ENCODE measurements at regions of chr18 and their contacts with region 1.

Region 1: GRCh38 chr18:25467226-25467987 is 115.4 kb upstream of the ZNF521 start:
- DNase-seq: no peak
- ATAC-seq: no peak; the same call in 2 of the 3 replicates
- H3K4me3 ChIP-seq: no peak overlapping the region
- H3K27ac ChIP-seq: no peak overlapping the region
- H3K4me1 ChIP-seq: no peaks in the 10 kb centered on the region
- H3K27me3 ChIP-seq: no peaks in the 10 kb centered on the region
- CTCF ChIP-seq: no peak
- EP300 ChIP-seq: no peak
- POLR2A ChIP-seq: no peak
- RAD21 ChIP-seq: no peak

Region 2: GRCh38 chr18:25349131-25349925 is 118.1 kb before region 1 on chr18:
- CTCF ChIA-PET with region 1: no interaction called
- POLR2A ChIA-PET with region 1: no interaction called
- in situ Hi-C with region 1: no loop called
- intact Hi-C with region 1: no loop called
- DNase-seq: no peak
- ATAC-seq: no peak
- H3K4me3 ChIP-seq: no peak overlapping the region
- H3K27ac ChIP-seq: no peak overlapping the region
- H3K4me1 ChIP-seq: peaks cover 0 to 23% of the 10 kb centered on the region in 2 experiments; a peak in 1 of 5 replicates
- H3K27me3 ChIP-seq: peaks cover 0 to 4% of the 10 kb centered on the region in 2 experiments; a peak in 1 of 5 replicates
- CTCF ChIP-seq: no peak
- EP300 ChIP-seq: no peak
- POLR2A ChIP-seq: no peak
- RAD21 ChIP-seq: no peak

Region 3: DNA sequence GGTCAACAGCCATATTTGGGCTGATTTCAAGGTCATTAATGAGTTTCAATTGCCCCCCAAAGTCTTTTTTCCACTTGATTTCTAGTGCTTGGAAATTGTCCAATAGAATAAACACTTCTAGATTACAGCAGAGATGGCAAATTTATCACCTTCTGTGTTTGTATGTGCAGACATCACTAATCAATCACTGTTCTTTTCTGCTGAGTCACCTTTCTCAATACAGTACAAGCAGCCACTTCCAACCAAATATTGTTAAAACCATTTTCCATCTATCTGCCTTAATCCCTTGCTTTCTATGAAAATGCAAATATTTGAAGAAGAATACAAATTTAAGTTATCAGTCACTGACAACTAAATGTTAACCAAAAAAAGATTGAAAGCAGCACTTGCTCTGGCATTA is 75.2 kb before region 1 on chr18:
- CTCF ChIA-PET with region 1: no interaction called
- POLR2A ChIA-PET with region 1: no interaction called
- in situ Hi-C with region 1: no loop called
- intact Hi-C with region 1: no loop called
- DNase-seq: no peak
- ATAC-seq: no peak
- H3K4me3 ChIP-seq: no peak overlapping the region
- H3K27ac ChIP-seq: no peak overlapping the region
- H3K4me1 ChIP-seq: no peaks in the 10 kb centered on the region
- H3K27me3 ChIP-seq: no peaks in the 10 kb centered on the region
- CTCF ChIP-seq: no peak
- EP300 ChIP-seq: no peak
- POLR2A ChIP-seq: no peak
- RAD21 ChIP-seq: no peak

Region 4: GRCh38 chr18:25416374-25416773 is 51.0 kb before region 1 on chr18:
- CTCF ChIA-PET with region 1: no interaction called
- POLR2A ChIA-PET with region 1: no interaction called
- in situ Hi-C with region 1: no loop called
- intact Hi-C with region 1: loop called (anchors 10 kb)
- DNase-seq: no peak
- ATAC-seq: no peak
- H3K4me3 ChIP-seq: no peak overlapping the region
- H3K27ac ChIP-seq: no peak overlapping the region
- H3K4me1 ChIP-seq: no peaks in the 10 kb centered on the region
- H3K27me3 ChIP-seq: no peaks in the 10 kb centered on the region; a peak in 1 of 5 replicates
- CTCF ChIP-seq: no peak
- EP300 ChIP-seq: no peak
- POLR2A ChIP-seq: no peak
- RAD21 ChIP-seq: no peak